GM12878 (cell line): ENCODE measurements at regions of chr14 and their contacts with region 1.

Region 1: GRCh38 chr14:40188006-40188405 is 755.8 kb upstream of the FBXO33 start:
- DNase-seq: no peak
- ATAC-seq: peak; percentile 34; the same call in 1 of the 3 replicates
- H3K4me3 ChIP-seq: no peak overlapping the region
- H3K27ac ChIP-seq: no peak overlapping the region
- H3K4me1 ChIP-seq: no peaks in the 10 kb centered on the region
- H3K27me3 ChIP-seq: no peaks in the 10 kb centered on the region
- CTCF ChIP-seq: no peak
- EP300 ChIP-seq: no peak
- POLR2A ChIP-seq: no peak
- RAD21 ChIP-seq: no peak

Region 2: DNA sequence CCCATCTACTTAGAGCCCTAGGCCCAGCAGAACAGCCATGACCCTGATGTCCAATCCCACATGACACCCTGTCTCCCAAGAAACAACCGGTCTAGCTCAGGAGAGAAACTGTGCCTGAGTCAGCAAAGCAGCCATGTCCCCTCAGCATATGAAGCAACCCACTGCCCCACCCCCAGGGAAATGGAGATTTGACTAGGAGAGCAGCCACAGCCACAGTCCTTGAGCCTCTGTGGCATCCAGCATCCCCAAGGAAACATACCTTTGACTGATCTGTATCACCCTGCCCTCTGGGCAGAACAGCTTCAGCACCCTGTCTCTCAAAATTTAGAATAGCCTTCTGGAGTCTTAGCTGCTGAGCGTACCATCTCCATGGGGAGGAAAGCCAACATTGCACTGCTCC is 113.8 kb before region 1 on chr14:
- CTCF ChIA-PET with region 1: no interaction called
- POLR2A ChIA-PET with region 1: no interaction called
- RAD21 ChIA-PET with region 1: no interaction called
- SMC1A ChIA-PET with region 1: no interaction called
- in situ Hi-C with region 1: no loop called
- intact Hi-C with region 1: no loop called
- DNase-seq: no peak
- ATAC-seq: no peak
- H3K4me3 ChIP-seq: no peak overlapping the region
- H3K27ac ChIP-seq: no peak overlapping the region
- H3K4me1 ChIP-seq: no peaks in the 10 kb centered on the region
- H3K27me3 ChIP-seq: no peaks in the 10 kb centered on the region
- CTCF ChIP-seq: no peak
- EP300 ChIP-seq: no peak
- POLR2A ChIP-seq: no peak
- RAD21 ChIP-seq: no peak

Region 3: DNA sequence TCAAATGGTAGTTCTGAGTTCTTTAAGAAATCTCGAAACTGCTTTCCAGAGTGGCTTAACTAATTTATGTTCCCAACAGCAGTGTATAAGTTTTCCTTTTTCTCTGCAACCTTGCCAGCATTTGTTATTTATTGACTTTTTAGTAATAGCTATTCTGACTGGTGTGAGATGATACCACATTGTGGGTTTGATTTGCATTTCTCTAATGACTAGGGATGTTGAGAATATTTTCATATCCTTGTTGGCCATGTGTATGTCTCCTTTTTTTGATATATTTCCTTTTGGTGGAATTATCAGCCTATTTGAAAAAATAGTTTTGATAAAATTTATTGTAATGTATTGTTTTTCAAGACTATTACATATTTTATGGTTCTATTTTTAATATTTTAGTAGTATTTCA is 54.5 kb before region 1 on chr14:
- CTCF ChIA-PET with region 1: no interaction called
- POLR2A ChIA-PET with region 1: no interaction called
- RAD21 ChIA-PET with region 1: no interaction called
- SMC1A ChIA-PET with region 1: no interaction called
- in situ Hi-C with region 1: no loop called
- intact Hi-C with region 1: loop called (anchors 5 kb)
- DNase-seq: no peak
- ATAC-seq: no peak
- H3K4me3 ChIP-seq: no peak overlapping the region
- H3K27ac ChIP-seq: no peak overlapping the region
- H3K4me1 ChIP-seq: no peaks in the 10 kb centered on the region
- H3K27me3 ChIP-seq: no peaks in the 10 kb centered on the region
- CTCF ChIP-seq: no peak
- EP300 ChIP-seq: no peak
- POLR2A ChIP-seq: no peak
- RAD21 ChIP-seq: no peak

Region 4: DNA sequence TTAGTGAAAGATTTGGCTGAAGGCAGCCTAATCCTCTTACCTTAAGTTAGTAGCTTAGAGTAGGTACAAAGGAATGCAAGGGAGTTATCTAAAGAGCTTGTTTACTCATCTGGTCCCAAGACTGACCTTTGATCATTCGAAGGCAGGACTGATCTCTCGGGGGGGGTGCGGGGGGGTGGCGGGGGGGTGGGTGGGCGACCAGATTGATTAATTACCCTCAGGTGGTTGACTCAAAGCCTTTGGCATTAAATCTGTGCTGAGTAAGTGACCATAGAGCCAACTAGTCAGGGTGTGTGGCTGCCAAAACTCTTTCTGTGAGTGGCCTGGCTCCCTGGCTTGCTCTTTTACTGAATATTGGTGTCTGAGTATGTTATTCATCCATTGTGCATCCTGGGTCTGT is 23.9 kb before region 1 on chr14:
- CTCF ChIA-PET with region 1: no interaction called
- POLR2A ChIA-PET with region 1: no interaction called
- RAD21 ChIA-PET with region 1: no interaction called
- SMC1A ChIA-PET with region 1: no interaction called
- in situ Hi-C with region 1: no loop called
- intact Hi-C with region 1: no loop called
- DNase-seq: no peak
- ATAC-seq: no peak
- H3K4me3 ChIP-seq: no peak overlapping the region
- H3K27ac ChIP-seq: no peak overlapping the region
- H3K4me1 ChIP-seq: no peaks in the 10 kb centered on the region
- H3K27me3 ChIP-seq: no peaks in the 10 kb centered on the region
- CTCF ChIP-seq: no peak
- EP300 ChIP-seq: no peak
- POLR2A ChIP-seq: no peak
- RAD21 ChIP-seq: no peak

Region 5: DNA sequence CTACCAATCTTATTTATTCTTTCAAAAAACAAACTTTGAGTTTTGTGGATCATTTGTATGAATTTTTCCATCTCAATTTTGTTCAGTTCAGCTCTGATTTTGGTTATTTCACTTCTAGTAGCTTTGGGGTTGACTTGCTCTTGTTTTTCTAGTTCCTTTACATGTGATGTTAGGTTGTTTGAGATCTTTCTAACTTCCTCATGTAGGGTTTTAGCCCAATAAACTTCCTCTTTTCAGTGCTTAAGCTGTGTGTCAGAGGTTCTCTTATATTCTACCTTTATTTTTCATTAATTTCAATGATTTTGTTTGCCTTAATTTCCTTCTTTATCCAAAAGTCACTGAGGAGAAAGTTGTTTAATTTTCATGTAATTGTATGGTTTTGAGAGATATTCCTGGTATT is 104.7 kb after region 1 on chr14:
- CTCF ChIA-PET with region 1: no interaction called
- POLR2A ChIA-PET with region 1: no interaction called
- RAD21 ChIA-PET with region 1: no interaction called
- SMC1A ChIA-PET with region 1: no interaction called
- in situ Hi-C with region 1: no loop called
- intact Hi-C with region 1: no loop called
- DNase-seq: no peak
- ATAC-seq: no peak
- H3K4me3 ChIP-seq: no peak overlapping the region
- H3K27ac ChIP-seq: no peak overlapping the region
- H3K4me1 ChIP-seq: no peaks in the 10 kb centered on the region
- H3K27me3 ChIP-seq: no peaks in the 10 kb centered on the region
- CTCF ChIP-seq: no peak
- EP300 ChIP-seq: no peak
- POLR2A ChIP-seq: no peak
- RAD21 ChIP-seq: no peak